HEK293 (cell line): ENCODE measurements at regions of chr15 and their contacts with region 1.

Region 1: GRCh38 chr15:84955089-84955848 is 26.4 kb upstream of the PDE8A start:
- H3K4me3 ChIP-seq: peak overlapping the region; percentile 22
- H3K27ac ChIP-seq: no peak overlapping the region
- H3K4me1 ChIP-seq: no peaks in the 10 kb centered on the region
- CTCF ChIP-seq: peak; percentile 71

Region 2: DNA sequence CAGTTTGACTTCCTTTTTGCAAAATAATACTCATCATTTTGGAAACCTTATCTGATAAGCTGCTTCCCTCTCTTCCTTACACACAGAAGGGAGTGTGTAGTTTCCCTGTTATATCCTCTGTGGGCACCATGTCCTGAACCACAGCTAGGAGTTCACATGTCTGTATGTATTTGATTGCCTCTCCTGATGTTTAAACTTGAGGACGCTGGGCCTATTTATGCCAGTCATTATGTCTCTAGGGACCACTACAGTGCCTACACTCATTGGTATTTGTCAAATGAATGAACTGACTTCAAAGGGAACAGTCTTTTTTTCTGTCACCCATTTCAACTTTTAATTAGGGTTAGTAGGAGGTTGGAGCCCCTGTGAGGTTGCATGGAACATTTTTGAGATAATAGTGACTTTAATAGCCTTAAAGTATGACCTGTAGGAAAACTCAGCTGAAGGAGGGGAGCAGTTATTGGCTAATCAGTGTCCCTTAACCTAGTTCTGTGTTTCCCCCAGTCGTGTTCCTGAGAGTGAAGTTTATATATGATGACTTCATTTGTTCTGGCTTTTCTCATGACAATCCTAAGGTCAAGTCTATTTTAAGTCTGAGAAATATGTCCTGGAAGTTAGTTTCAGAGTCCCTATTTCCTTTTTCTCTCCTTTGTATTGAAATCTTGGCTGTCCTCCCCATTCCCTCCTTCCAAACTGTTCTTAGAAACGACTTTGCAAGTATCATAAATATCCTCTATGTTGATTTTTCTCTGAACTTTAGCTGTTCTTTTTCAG is 55.3 kb after region 1 on chr15:
- CTCF ChIA-PET with region 1: interaction called, 10 read pairs
- POLR2A ChIA-PET with region 1: no interaction called
- H3K4me3 ChIP-seq: no peak overlapping the region
- H3K27ac ChIP-seq: no peak overlapping the region
- H3K4me1 ChIP-seq: peaks cover 39% of the 10 kb centered on the region
- CTCF ChIP-seq: no peak

Region 3: DNA sequence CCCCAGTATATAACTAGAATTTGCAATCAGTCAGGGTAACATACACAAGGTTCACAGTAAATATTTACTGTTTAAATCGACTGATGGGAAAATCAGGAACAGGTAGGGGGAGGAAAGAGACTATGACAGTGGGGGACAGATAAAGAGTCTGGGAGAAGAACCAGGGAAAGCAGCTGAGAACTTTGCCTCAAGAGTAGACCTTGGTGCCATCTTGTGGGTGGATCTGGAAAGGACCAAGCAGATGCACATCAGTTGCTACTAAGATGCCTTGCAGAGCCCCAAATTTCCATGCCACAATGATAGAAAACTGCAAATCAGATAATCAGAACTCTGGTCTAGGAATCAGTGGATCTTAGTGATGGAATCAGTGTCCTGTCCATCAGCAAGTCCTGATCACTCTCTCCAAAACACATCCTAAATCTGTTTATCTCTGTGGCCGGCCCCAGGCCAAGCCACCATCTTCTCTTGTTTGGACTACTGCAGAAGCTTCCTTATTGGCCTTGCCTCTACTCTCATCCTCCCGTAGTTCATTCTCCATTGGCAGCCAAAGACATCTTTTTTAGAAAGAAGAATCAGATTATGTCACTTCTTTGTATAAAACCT is 89.1 kb after region 1 on chr15:
- CTCF ChIA-PET with region 1: interaction called, 36 read pairs
- POLR2A ChIA-PET with region 1: no interaction called
- H3K4me3 ChIP-seq: no peak overlapping the region
- H3K27ac ChIP-seq: no peak overlapping the region
- H3K4me1 ChIP-seq: peaks cover 17% of the 10 kb centered on the region
- CTCF ChIP-seq: peak; percentile 51; the same call in 1 of the 2 replicates

Region 4: DNA sequence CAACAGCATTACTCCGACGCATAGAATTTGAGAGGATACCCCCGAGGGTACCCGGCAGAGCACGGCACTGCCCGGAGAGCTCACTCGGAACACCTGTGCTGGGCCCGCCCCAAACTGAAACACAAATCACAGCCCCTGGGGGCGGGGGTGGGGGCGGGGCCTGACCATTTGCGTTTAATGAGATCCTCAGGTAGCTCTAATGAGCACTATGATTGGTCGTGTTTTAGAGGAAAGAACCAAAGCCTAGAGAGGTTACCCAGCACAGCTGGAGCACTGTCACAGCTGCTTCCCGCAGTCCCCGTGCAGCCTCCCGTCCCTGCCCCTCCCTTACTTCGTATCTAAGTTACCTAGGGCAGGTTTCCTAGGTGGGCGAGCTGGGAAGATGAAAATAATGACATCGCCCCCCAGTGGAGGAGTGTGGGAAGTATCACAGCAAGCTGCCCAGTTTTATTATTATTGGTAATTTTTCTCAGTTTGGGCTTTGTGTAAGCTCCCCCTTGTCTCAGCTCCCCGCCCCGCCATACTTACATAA is 213.4 kb after region 1 on chr15:
- CTCF ChIA-PET with region 1: interaction called, 13 read pairs
- POLR2A ChIA-PET with region 1: no interaction called
- H3K4me3 ChIP-seq: peak overlapping the region; percentile 45
- H3K27ac ChIP-seq: no peak overlapping the region
- H3K4me1 ChIP-seq: peaks cover 3% of the 10 kb centered on the region; the same call in 1 of the 2 replicates
- CTCF ChIP-seq: peak; percentile 38; the same call in 1 of the 2 replicates